K562 (cell line): ENCODE measurements at regions of chr20 and their contacts with region 1.

Region 1: GRCh38 chr20:39049684-39050554 is 87.8 kb downstream of the DHX35 start:
- DNase-seq: peak; percentile 80 to 89 (median 87)
- ATAC-seq: peak; percentile 94
- H3K4me3 ChIP-seq: peak overlapping the region; percentile 55
- H3K27ac ChIP-seq: peak overlapping the region; percentile 65
- H3K4me1 ChIP-seq: peaks cover 8 to 16% of the 10 kb centered on the region in 2 experiments
- H3K27me3 ChIP-seq: peaks cover 0 to 6% of the 10 kb centered on the region in 2 experiments; a peak in 3 of 5 replicates
- CTCF ChIP-seq: peak; percentile 96 to 97 (median 96)
- EP300 ChIP-seq: no peak
- POLR2A ChIP-seq: peak; percentile 76
- RAD21 ChIP-seq: peak; percentile 88 to 93

Region 2: GRCh38 chr20:38730989-38731737 is 318.8 kb before region 1 on chr20:
- CTCF ChIA-PET with region 1: no interaction called
- POLR2A ChIA-PET with region 1: no interaction called
- in situ Hi-C with region 1: no loop called
- intact Hi-C with region 1: loop called (anchors 10 kb)
- DNase-seq: peak; percentile 83 to 92 (median 89)
- ATAC-seq: peak; percentile 93
- H3K4me3 ChIP-seq: peak overlapping the region; percentile 37
- H3K27ac ChIP-seq: no peak overlapping the region
- H3K4me1 ChIP-seq: peaks cover 8 to 32% of the 10 kb centered on the region in 2 experiments; a peak in 4 of 5 replicates
- H3K27me3 ChIP-seq: peaks cover 22 to 60% of the 10 kb centered on the region in 2 experiments
- CTCF ChIP-seq: peak; percentile 86 to 97 (median 87)
- EP300 ChIP-seq: no peak
- POLR2A ChIP-seq: no peak
- RAD21 ChIP-seq: peak; percentile 69 to 86

Region 3: DNA sequence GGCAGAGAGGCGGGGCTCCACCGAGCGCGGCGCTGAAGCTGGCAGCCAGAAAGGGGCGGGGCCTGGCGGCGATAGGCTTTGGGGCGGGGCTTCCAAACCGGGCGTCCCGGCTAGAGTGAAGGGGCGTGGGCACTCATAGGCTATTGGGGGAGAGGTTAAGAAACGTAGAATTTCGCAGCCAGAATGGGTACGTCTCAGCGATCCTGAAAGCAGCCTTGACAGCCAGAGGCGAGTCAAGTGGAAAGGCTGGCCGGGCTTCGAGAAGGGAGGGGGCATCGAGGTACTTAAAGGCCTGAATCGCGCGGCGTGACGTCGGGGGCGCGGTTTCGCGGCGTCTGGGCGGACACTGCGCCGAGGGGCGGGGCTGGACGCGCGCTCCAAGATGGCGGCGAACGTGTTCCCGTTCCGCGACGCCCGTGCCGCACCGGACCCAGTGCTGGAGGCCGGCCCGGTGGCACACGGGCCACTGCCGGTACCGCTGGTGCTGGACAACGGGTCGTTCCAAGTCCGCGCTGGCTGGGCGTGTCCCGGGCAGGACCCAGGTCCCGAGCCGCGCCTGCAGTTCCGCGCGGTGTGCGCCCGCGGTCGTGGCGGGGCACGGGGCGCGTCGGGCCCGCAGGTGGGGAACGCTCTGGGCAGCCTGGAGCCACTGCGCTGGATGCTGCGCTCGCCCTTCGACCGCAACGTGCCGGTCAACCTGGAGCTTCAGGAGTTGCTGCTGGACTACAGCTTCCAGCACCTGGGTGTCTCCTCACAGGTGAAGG is 301.6 kb before region 1 on chr20 and contains the start of gene ACTR5:
- CTCF ChIA-PET with region 1: no interaction called
- POLR2A ChIA-PET with region 1: no interaction called
- in situ Hi-C with region 1: no loop called
- intact Hi-C with region 1: loop called (anchors 10 kb)
- DNase-seq: peak; percentile 91 to 97 (median 96)
- ATAC-seq: peak; percentile 95
- H3K4me3 ChIP-seq: peak within 1 kb of the TSS; percentile 89
- H3K27ac ChIP-seq: peak within 1 kb of the TSS; percentile 77
- H3K4me1 ChIP-seq: peaks cover 12 to 18% of the 10 kb centered on the region in 2 experiments; a peak in 4 of 5 replicates
- H3K27me3 ChIP-seq: no peaks in the 10 kb centered on the region
- CTCF ChIP-seq: no peak
- EP300 ChIP-seq: no peak
- POLR2A ChIP-seq: peak; percentile 82
- RAD21 ChIP-seq: no peak
- polyA plus RNA-seq, gene ACTR5: 0.93 to 1.8 TPM

Region 4: DNA sequence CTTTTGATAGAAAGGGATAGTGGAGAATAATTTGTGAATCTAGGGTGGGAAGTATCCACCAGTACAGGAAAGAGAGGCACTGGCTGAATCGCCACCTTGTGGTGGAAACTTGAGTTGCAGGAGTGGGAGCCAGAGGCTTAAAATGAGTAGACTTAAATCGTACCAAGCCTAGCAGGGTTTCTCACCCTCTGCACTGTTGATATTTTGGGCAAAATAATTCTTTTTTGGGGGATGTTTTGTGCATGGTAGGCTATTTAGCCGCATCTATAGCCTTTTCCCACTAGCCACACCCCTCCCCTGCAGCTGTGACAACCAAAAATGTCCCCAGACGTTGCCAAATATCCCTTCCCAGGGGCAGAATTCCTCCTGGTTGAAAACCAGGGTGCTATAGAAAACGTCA is 31.3 kb after region 1 on chr20:
- CTCF ChIA-PET with region 1: interaction called, 29 read pairs
- POLR2A ChIA-PET with region 1: no interaction called
- in situ Hi-C with region 1: no loop called
- intact Hi-C with region 1: loop called (anchors 1 kb)
- DNase-seq: peak; percentile 76 to 81 (median 78)
- ATAC-seq: peak; percentile 93
- H3K4me3 ChIP-seq: no peak overlapping the region
- H3K27ac ChIP-seq: no peak overlapping the region
- H3K4me1 ChIP-seq: no peaks in the 10 kb centered on the region; a peak in 1 of 5 replicates
- H3K27me3 ChIP-seq: peaks cover 10 to 12% of the 10 kb centered on the region in 2 experiments; a peak in 4 of 5 replicates
- CTCF ChIP-seq: peak; percentile 75 to 89 (median 84)
- EP300 ChIP-seq: no peak
- POLR2A ChIP-seq: no peak
- RAD21 ChIP-seq: peak; percentile 52 to 80; a peak in 3 of 4 replicates

Region 5: GRCh38 chr20:39105549-39105948 is 55.6 kb after region 1 on chr20:
- CTCF ChIA-PET with region 1: no interaction called
- POLR2A ChIA-PET with region 1: no interaction called
- in situ Hi-C with region 1: no loop called
- intact Hi-C with region 1: loop called (anchors 2 kb)
- DNase-seq: peak; percentile 25 to 48 (median 34)
- ATAC-seq: peak; percentile 74; the same call in 2 of the 3 replicates
- H3K4me3 ChIP-seq: no peak overlapping the region
- H3K27ac ChIP-seq: no peak overlapping the region
- H3K4me1 ChIP-seq: no peaks in the 10 kb centered on the region
- H3K27me3 ChIP-seq: peaks cover 0 to 6% of the 10 kb centered on the region in 2 experiments; a peak in 2 of 5 replicates
- CTCF ChIP-seq: peak; percentile 48 to 57 (median 55)
- EP300 ChIP-seq: no peak
- POLR2A ChIP-seq: no peak
- RAD21 ChIP-seq: peak in 1 of 2 experiments; percentile 43; a peak in 2 of 4 replicates